Gastrocnemius medialis (tissue), 4 donors: ENCODE measurements at regions of chr6 and their contacts with region 1.

Region 1: GRCh38 chr6:27753668-27754407 is 158.4 kb downstream of the OR2B2 start:
- DNase-seq: peak in 1 of 2 donors; percentile 18
- ATAC-seq: no peak
- H3K4me3 ChIP-seq: peak overlapping the region; percentile 68 to 79 (median 73)
- H3K27ac ChIP-seq: no peak overlapping the region
- H3K4me1 ChIP-seq: no peaks in the 10 kb centered on the region
- H3K27me3 ChIP-seq: peaks cover 13 to 22% (median 21%) of the 10 kb centered on the region in 3 donors
- CTCF ChIP-seq: no peak
- POLR2A ChIP-seq: no peak

Region 2: DNA sequence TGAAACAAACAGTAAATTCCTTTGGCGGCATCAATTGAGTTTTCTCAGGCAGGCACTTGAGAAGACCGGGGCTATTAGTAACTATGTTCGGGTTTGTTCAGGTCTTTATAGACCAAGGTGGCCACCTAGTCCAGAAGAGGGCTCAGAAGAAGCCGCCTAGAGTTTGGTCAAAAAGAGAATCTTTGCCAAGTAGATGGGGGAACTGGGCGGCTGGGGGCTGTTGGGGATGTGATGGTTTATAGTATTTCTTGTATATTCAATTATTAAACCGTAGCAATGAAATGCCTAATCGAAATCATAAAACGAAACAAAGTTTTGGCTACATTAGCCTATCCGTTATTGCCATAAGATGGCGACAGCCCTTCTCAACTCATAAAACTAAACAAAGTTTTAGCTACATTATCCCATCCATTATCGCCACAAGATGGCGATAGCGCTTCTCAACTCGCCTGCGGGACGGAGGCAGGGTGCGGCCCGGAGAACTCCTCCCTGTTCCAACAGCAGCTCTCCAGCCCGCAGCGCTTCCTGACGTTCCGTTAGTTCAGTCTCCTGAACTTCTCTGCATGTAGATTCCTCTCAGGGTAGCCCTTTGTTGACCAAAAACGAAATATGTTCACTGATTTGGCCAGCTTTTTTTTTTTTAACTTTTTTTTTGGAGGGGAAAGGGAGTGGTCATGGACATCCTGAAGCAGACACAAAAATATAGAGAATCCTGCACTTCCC is 626.9 kb before region 1 on chr6:
- in situ Hi-C with region 1: no loop called
- intact Hi-C with region 1: loop called (anchors 2 kb)
- DNase-seq: peak; percentile 68 to 73
- ATAC-seq: peak; percentile 82
- H3K4me3 ChIP-seq: peak overlapping the region; percentile 21 to 44 (median 36)
- H3K27ac ChIP-seq: peak overlapping the region in 2 of 4 donors; percentile 18 to 46
- H3K4me1 ChIP-seq: peaks cover under 1 to 4% of the 10 kb centered on the region in 2 donors
- H3K27me3 ChIP-seq: no peaks in the 10 kb centered on the region
- CTCF ChIP-seq: peak; percentile 37 to 85 (median 61)
- POLR2A ChIP-seq: no peak

Region 3: DNA sequence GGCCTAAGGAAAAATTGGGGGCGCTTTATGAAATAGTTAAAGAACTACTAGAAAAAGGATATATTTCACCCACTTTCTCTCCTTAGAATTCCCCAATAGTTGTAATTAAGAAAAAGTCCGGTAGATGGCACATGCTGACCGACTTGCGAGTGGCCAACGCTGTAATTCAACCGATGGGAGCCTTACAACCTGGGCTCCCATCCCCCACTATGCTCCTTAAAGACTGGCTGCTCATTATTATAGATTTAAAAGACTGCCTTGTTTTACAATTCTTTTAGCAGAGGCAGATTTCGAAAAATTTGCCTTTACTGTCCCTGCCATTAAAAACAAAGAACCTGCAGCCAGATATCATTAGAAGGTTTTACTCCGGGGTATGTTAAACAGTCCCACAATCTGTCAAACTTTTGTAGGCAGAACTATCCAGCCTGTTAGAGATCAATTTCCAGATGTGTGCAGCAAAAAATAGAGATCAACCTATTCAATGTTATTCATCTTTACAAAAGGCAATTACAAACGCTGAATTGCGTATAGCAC is 564.9 kb before region 1 on chr6:
- in situ Hi-C with region 1: no loop called
- intact Hi-C with region 1: loop called (anchors 2 kb)
- DNase-seq: peak; percentile 24 to 40
- ATAC-seq: peak; percentile 95 to 96
- H3K4me3 ChIP-seq: peak overlapping the region; percentile 61 to 75 (median 70)
- H3K27ac ChIP-seq: peak overlapping the region; percentile 44 to 66 (median 61)
- H3K4me1 ChIP-seq: peaks cover 0 to 3% of the 10 kb centered on the region in 2 donors
- H3K27me3 ChIP-seq: no peaks in the 10 kb centered on the region
- CTCF ChIP-seq: peak; percentile 45 to 81 (median 69)
- POLR2A ChIP-seq: no peak

Region 4: DNA sequence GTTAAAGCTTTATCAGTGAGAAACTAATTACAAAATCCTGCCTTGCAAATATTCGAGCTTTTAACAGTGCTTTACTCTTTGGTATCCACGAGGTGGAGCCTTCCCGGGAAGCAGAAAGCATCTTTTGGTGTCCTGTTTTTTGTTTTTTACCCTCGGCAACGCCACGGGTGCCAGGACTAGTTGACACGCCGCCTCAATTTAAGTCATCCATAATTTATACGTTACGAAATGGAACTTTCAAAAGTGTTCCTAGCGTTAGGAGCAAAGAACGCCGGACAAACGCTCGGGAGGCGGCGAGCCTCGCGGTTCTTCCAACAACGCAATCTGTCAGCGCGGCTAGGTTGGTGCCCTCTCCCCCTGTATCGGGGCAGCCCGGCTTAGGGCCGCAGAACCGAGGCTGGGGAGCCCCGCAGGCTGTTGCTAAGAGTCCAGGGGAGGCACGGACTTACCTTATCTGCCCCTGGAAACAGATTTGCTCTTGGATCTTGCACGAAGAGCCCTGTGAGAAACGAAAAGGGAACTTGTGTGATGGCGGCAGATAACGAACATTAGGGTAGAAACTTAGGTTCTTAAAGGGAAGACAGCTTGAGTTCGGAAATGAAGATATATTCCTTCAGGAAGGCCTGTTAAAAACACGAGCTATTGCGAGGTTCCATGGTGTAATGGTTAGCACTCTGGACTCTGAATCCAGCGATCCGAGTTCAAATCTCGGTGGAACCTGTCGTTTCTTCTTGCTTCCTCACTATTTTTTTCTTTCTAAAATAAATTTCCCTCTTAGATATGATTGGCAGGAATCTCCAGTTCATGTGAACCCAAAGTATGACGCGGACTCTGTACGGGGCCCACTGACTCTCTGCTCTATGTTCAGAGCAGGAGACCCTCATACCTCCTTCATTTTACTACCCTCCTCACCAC is 234.7 kb before region 1 on chr6:
- in situ Hi-C with region 1: loop called (anchors 10 to 25 kb)
- intact Hi-C with region 1: loop called (anchors 1 kb)
- DNase-seq: peak; percentile 18 to 29
- ATAC-seq: peak; percentile 88 to 89
- H3K4me3 ChIP-seq: peak overlapping the region; percentile 65 to 88 (median 76)
- H3K27ac ChIP-seq: peak overlapping the region; percentile 77 to 82 (median 79)
- H3K4me1 ChIP-seq: peaks cover 6 to 7% of the 10 kb centered on the region in 2 donors
- H3K27me3 ChIP-seq: peaks cover 4 to 11% (median 8%) of the 10 kb centered on the region in 3 donors
- CTCF ChIP-seq: peak in 4 of 5 experiments; percentile 32 to 65 (median 59)
- POLR2A ChIP-seq: no peak

Region 5: DNA sequence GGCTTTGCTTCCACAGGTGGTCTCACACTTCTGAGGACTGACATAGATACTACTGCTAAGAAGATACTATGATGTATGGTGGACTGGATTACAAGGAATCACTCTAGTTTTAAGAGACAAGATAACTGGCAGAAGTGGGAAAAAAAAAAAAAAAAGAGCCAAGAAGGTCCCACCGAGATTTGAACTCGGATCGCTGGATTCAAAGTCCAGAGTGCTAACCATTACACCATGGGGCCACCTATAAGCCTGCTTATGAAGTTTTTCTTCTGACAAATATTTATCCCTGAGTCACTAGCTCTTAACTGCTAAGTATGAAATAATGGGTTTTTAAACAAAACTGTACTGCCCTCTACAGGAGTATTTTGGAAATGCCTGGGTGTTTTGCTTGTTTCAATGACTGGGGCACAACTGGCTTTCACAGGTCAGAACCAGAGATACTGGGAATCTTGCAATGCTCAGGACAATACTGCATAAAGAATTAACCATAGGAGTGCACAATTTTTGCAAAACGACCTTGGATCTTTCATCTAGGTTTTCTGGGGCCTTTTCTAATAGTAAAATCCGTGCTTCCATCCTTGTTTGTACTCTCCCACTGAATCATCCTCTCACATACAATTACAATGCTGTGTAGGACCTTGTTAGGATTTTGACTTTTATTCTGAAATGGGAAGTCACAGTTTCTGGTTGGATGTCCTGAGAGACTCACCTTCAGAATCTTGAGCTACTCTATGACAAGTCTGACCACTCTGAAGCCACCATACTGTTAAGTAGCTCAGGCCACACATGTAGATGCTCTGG is 42.1 kb after region 1 on chr6:
- in situ Hi-C with region 1: no loop called
- intact Hi-C with region 1: loop called (anchors 1 kb)
- DNase-seq: no peak
- ATAC-seq: peak; percentile 66 to 87
- H3K4me3 ChIP-seq: no peak overlapping the region
- H3K27ac ChIP-seq: no peak overlapping the region
- H3K4me1 ChIP-seq: peaks cover 5 to 14% of the 10 kb centered on the region in 2 donors
- H3K27me3 ChIP-seq: peaks cover 6 to 18% (median 12%) of the 10 kb centered on the region in 3 donors
- CTCF ChIP-seq: peak; percentile 51 to 76 (median 68)
- POLR2A ChIP-seq: no peak

Region 6: DNA sequence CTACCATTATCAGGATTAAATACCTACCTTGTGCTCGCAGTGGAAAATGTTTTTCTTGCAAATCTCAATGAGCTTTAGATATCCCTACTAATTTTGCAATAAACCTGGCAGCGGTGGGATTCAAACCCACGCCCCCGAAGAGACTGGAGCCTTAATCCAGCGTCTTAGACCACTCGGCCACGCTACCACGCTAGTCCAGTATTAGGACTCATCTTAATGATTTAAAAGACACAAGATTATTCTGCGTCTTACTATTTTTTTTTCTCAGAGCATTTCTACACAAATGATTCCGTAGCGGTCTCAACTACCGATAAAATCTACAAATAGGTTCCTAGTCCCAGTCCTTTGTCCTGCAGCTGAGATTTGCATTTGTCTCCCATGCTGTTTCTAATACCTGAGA is 724.7 kb after region 1 on chr6:
- in situ Hi-C with region 1: no loop called
- intact Hi-C with region 1: no loop called
- DNase-seq: no peak
- ATAC-seq: no peak
- H3K4me3 ChIP-seq: no peak overlapping the region
- H3K27ac ChIP-seq: no peak overlapping the region
- H3K4me1 ChIP-seq: no peaks in the 10 kb centered on the region
- H3K27me3 ChIP-seq: peaks cover 0 to 14% (median 3%) of the 10 kb centered on the region in 3 donors
- CTCF ChIP-seq: no peak
- POLR2A ChIP-seq: no peak